Activated naive CD4-positive, alpha-beta T cell treated with anti-CD3 and anti-CD28 coated beads for 36 hours (primary cell): ENCODE measurements at regions of chr3 and their contacts with region 1.

Region 1: GRCh38 chr3:185770109-185770508 is 54.7 kb downstream of the IGF2BP2 start:
- DNase-seq: no peak
- H3K4me3 Mint-ChIP-seq: no peak overlapping the region
- H3K27ac Mint-ChIP-seq: no peak overlapping the region
- H3K4me1 Mint-ChIP-seq: peaks cover 6% of the 10 kb centered on the region
- H3K27me3 Mint-ChIP-seq: peaks cover 9% of the 10 kb centered on the region

Region 2: GRCh38 chr3:185473290-185473815 is 296.8 kb before region 1 on chr3:
- CTCF ChIA-PET with region 1: no interaction called
- intact Hi-C with region 1: no loop called
- DNase-seq: no peak
- H3K4me3 Mint-ChIP-seq: no peak overlapping the region
- H3K27ac Mint-ChIP-seq: no peak overlapping the region
- H3K4me1 Mint-ChIP-seq: no peaks in the 10 kb centered on the region
- H3K27me3 Mint-ChIP-seq: no peaks in the 10 kb centered on the region

Region 3: GRCh38 chr3:185488465-185488864 is 281.6 kb before region 1 on chr3:
- CTCF ChIA-PET with region 1: no interaction called
- intact Hi-C with region 1: no loop called
- DNase-seq: no peak
- H3K4me3 Mint-ChIP-seq: no peak overlapping the region
- H3K27ac Mint-ChIP-seq: no peak overlapping the region
- H3K4me1 Mint-ChIP-seq: peaks cover 2% of the 10 kb centered on the region
- H3K27me3 Mint-ChIP-seq: no peaks in the 10 kb centered on the region

Region 4: DNA sequence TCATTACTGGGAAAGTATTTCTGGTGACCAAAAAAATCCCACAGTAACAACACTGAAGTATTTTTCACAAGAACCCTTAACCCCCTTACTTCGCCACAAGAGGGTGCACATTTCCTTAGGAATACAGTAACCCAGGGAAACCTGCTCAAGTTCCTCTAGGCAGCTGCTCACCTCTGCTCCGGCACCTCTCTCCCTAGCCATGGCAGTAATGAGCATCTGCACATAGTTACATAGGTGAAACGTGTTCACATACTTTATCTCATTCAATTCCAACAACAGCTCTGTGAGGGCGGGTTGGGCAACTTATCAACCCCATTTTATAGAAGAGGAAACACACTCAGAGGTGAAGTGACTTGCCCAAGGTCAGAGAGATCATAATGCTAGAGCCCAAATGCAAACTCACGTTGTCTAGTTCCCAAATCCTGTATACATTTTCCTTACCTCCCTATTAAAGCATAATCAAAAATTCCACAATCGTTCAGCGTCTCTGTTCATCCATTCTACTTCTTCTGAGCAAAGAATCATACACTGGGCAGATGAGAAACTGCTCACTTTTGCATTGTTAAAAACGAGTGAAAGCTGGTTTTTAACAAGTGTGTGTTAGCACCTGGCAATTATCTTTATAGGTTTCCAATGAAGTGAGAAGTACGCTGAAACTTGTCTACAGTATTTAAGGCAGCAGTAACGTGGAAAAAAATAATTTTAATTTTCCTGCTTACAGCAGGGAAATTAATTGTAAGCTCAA is 36.0 kb before region 1 on chr3:
- CTCF ChIA-PET with region 1: interaction called, 12 read pairs
- intact Hi-C with region 1: no loop called
- DNase-seq: peak; percentile 50
- H3K4me3 Mint-ChIP-seq: no peak overlapping the region
- H3K27ac Mint-ChIP-seq: no peak overlapping the region
- H3K4me1 Mint-ChIP-seq: no peaks in the 10 kb centered on the region
- H3K27me3 Mint-ChIP-seq: peaks cover 5% of the 10 kb centered on the region

Region 5: GRCh38 chr3:186487819-186488218 is 717.7 kb after region 1 on chr3:
- CTCF ChIA-PET with region 1: no interaction called
- intact Hi-C with region 1: no loop called
- DNase-seq: no peak
- H3K4me3 Mint-ChIP-seq: no peak overlapping the region
- H3K27ac Mint-ChIP-seq: no peak overlapping the region
- H3K4me1 Mint-ChIP-seq: peaks cover 13% of the 10 kb centered on the region
- H3K27me3 Mint-ChIP-seq: no peaks in the 10 kb centered on the region